ENCODE measurements at regions of chr9 and their contacts with region 1.

Region 1: GRCh38 chr9:97632985-97633858 is at the starts of genes NCBP1 and TSTD2:
- H3K4me3 ChIP-seq: peak within 1 kb of the TSS; percentile 97
- H3K27ac ChIP-seq: peak within 1 kb of the TSS; percentile 92
- H3K4me1 ChIP-seq: no peaks in the 10 kb centered on the region; the same call in 1 of the 2 replicates
- CTCF ChIP-seq: no peak; the same call in 1 of the 2 replicates

Region 2: DNA sequence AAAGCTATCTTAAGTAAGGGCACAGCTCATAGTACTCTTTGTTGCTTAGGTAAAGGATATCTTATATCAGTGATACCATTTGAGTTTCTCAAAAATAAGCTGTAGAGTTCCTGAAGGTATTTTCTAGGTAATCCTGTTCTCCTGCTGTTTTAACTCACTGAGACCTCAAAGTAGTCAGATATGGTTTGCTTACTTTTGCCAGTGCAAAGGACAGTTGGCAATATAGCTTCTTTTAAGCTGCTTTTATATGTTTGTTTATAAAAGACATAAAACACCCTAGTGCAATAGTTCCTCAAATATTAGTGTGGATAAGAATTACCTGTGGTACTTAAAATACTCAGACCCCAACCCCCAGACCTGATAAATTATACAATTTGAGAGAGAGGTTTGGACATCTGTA is 12.5 kb after region 1 on chr9:
- CTCF ChIA-PET with region 1: interaction called, 4 read pairs
- POLR2A ChIA-PET with region 1: interaction called, 16 read pairs
- H3K4me3 ChIP-seq: no peak overlapping the region
- H3K27ac ChIP-seq: no peak overlapping the region
- H3K4me1 ChIP-seq: no peaks in the 10 kb centered on the region
- CTCF ChIP-seq: no peak

Region 3: GRCh38 chr9:97696803-97697601 is 63.8 kb after region 1 on chr9 and contains the start of gene XPA:
- CTCF ChIA-PET with region 1: no interaction called
- POLR2A ChIA-PET with region 1: interaction called, 19 read pairs
- H3K4me3 ChIP-seq: peak within 1 kb of the TSS; percentile 96
- H3K27ac ChIP-seq: peak within 1 kb of the TSS; percentile 74
- H3K4me1 ChIP-seq: no peaks in the 10 kb centered on the region
- CTCF ChIP-seq: no peak

Region 4: DNA sequence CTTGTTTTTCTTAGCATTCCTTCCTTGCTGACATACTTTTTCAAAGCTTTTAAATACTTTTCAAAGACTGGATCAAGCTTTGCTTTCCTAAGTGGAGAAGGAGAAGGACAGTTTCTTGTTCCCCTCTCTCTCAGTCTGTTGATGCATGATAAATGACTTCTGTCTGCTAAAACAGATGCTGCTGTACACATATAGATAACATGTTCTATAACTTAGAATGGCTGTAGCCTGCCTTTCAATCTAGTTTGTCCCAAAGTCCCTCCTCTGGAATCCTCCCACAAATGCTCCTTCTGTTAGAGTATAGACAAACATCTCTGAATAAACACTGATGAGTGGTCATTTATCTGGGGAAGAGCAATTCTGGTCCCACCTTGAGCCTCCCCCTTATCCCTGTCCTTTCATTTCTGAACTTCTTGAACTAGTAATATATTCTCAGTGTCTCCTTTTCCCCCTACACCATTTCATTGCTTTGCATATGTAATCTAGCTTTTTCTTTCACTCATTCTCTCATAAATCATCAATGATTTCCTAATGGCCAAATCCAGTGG is 310.2 kb after region 1 on chr9:
- CTCF ChIA-PET with region 1: no interaction called
- POLR2A ChIA-PET with region 1: no interaction called
- H3K4me3 ChIP-seq: no peak overlapping the region
- H3K27ac ChIP-seq: no peak overlapping the region
- H3K4me1 ChIP-seq: no peaks in the 10 kb centered on the region
- CTCF ChIP-seq: no peak